ENCODE measurements at regions of chr18 and their contacts with region 1.

Region 1: GRCh38 chr18:56638271-56639093 is at the start of gene TXNL1:
- DNase-seq: peak; percentile 100
- H3K4me3 ChIP-seq: peak within 1 kb of the TSS; percentile 86 to 93 (median 91)
- H3K27ac ChIP-seq: peak within 1 kb of the TSS; percentile 93 to 99 (median 97)
- H3K4me1 ChIP-seq: peaks cover 0 to 37% (median 27%) of the 10 kb centered on the region in 4 donors
- H3K27me3 ChIP-seq: no peaks in the 10 kb centered on the region
- CTCF ChIP-seq: no peak
- EP300 ChIP-seq: peak in 2 of 4 donors; percentile 45 to 81
- POLR2A ChIP-seq: peak; percentile 81 to 85
- total RNA-seq, gene TXNL1: 39.8 to 47.9 (median 46.1) TPM

Region 2: DNA sequence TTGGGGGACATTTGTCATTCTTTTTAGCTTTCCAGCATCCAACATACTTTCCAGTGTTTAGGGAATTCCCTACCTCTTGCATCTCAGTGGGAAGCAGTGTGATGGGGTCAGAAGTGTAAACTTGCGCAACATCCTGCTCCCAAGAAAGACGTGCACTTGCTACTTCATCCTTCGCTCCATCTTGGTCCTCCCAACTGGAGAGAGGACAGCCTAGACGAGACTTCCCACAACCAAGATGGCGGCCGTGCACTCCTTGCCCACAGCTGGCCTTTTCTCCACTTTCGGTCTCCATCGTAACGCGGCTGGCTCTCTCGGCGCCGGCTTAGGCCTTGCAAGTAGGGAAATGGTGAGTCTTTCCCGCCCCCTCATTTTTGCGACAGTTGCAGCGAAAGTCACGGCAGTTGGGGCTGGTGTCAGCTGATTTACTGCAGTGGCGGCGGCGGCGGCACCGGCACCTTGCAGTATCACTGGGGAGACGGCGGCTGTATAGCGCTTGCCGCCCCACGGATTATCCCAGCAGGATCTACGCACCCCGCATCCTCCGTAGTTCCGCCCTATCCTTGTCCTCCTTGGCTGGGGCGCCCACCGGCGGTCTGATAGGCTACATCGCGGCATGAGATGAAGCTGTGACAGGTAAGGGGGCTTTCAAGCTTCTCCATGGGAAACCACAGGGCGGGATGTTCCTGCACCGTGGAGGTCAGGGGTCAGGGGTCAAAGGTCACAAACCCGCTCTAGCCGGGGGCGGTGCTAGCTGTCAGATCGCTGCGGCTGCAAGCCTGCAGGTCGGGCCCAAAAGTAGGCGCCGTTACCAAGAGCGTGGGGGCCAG is 12.7 kb after region 1 on chr18 and contains the start of gene WDR7:
- intact Hi-C with region 1: loop called (anchors 1 kb)
- DNase-seq: peak; percentile 99
- H3K4me3 ChIP-seq: peak within 1 kb of the TSS; percentile 84 to 92 (median 88)
- H3K27ac ChIP-seq: peak within 1 kb of the TSS; percentile 87 to 91 (median 90)
- H3K4me1 ChIP-seq: peaks cover 0 to 21% (median 12%) of the 10 kb centered on the region in 4 donors
- H3K27me3 ChIP-seq: no peaks in the 10 kb centered on the region
- CTCF ChIP-seq: peak in 1 of 4 experiments; percentile 8
- EP300 ChIP-seq: no peak
- POLR2A ChIP-seq: peak in 1 of 2 donors; percentile 18
- total RNA-seq, gene WDR7: 28.5 to 45.3 (median 39.1) TPM